Naive thymus-derived CD4-positive, alpha-beta T cell (primary cell): ENCODE measurements at regions of chr17 and their contacts with region 1.

Region 1: GRCh38 chr17:32006957-32007462 is at the start of gene LRRC37B:
- DNase-seq: peak; percentile 80 to 95 (median 87)
- ATAC-seq: peak; percentile 98
- H3K4me3 ChIP-seq: peak within 1 kb of the TSS; percentile 97
- H3K4me3 Mint-ChIP-seq: peak within 1 kb of the TSS; percentile 86 to 98 (median 95)
- H3K27ac ChIP-seq: peak within 1 kb of the TSS; percentile 85
- H3K27ac Mint-ChIP-seq: peak within 1 kb of the TSS; percentile 87 to 98 (median 93)
- H3K4me1 ChIP-seq: peaks cover 9 to 14% of the 10 kb centered on the region in 2 donors
- H3K4me1 Mint-ChIP-seq: peaks cover 25 to 44% (median 35%) of the 10 kb centered on the region in 7 donors
- H3K27me3 ChIP-seq: no peaks in the 10 kb centered on the region
- H3K27me3 Mint-ChIP-seq: peaks cover 0 to 6% (median 0%) of the 10 kb centered on the region in 5 donors
- total RNA-seq, gene LRRC37B: 42.1 to 69.9 (median 56.2) TPM

Region 2: GRCh38 chr17:32019228-32019627 is 12.2 kb after region 1 on chr17:
- CTCF ChIA-PET with region 1: interaction called, 3 read pairs
- POLR2A ChIA-PET with region 1: interaction called, 12 read pairs
- intact Hi-C with region 1: no loop called
- DNase-seq: no peak
- ATAC-seq: no peak
- H3K4me3 ChIP-seq: no peak overlapping the region
- H3K4me3 Mint-ChIP-seq: no peak overlapping the region
- H3K27ac ChIP-seq: no peak overlapping the region
- H3K27ac Mint-ChIP-seq: no peak overlapping the region
- H3K4me1 ChIP-seq: no peaks in the 10 kb centered on the region
- H3K4me1 Mint-ChIP-seq: peaks cover 12 to 40% (median 29%) of the 10 kb centered on the region in 7 donors
- H3K27me3 ChIP-seq: no peaks in the 10 kb centered on the region
- H3K27me3 Mint-ChIP-seq: no peaks in the 10 kb centered on the region

Region 3: DNA sequence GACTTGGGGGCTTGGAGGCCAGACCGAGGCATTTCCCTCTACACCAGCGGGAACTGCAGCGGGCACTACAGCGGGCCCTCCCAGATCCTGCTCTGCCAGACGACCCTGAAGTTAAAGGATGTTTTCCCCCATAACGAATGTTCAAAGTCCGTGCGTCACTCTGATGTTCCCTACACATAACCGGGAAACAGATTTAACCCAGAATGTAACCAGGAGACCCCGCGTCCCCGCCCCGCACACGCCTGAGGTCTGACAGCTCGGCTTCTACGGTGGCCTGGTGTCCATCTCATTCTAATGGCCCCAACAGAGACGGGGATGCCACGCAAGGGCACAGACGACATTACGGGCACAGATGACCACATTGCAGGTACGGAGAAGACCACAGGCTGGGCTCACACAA is 103.6 kb after region 1 on chr17:
- CTCF ChIA-PET with region 1: no interaction called
- POLR2A ChIA-PET with region 1: no interaction called
- intact Hi-C with region 1: no loop called
- DNase-seq: no peak
- ATAC-seq: no peak
- H3K4me3 ChIP-seq: no peak overlapping the region
- H3K4me3 Mint-ChIP-seq: no peak overlapping the region
- H3K27ac ChIP-seq: no peak overlapping the region
- H3K27ac Mint-ChIP-seq: peak overlapping the region in 1 of 9 donors; percentile 41
- H3K4me1 ChIP-seq: peaks cover 0 to 20% of the 10 kb centered on the region in 2 donors
- H3K4me1 Mint-ChIP-seq: peaks cover 14 to 44% (median 28%) of the 10 kb centered on the region in 7 donors
- H3K27me3 ChIP-seq: no peaks in the 10 kb centered on the region
- H3K27me3 Mint-ChIP-seq: no peaks in the 10 kb centered on the region

Region 4: DNA sequence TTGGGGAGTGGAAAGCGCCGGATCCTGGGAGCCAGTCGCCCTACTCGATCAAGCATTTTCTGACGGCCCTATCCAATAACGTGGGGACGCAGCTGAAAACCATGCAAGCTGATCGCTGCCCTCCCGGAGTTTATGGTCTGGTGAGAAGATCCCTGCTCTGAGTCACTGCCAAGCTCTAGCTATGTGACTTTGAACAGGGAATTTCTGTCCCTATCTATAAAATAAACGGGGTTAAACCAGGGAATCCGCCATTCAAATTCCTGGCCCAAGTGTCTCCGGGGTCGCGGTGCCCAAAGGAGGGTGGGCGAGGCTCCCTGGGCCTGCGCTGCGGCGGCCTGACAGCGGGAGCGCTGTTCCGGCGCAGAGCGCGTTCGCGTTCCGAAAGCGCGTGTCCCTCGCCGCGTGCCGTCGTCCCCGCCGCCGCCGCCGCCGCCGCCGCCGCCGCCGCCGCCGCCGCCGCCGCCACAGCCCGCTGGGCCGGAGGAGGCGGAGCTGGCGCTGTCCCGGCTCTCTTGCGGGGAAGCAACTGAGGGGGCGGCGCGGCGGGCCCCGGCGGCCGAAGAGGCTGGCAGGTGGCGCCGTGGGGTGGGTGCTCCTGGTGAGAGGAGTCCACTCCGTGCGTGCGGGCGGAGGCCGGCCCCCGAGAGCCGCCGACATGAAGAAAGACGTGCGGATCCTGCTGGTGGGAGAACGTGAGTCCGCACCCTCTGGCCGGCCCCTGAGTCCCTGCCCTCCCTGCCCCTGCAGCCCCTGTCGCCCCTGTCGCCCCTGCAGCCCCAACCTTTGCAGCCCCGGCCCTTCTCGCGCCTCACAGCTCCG is 135.2 kb after region 1 on chr17 and contains the start of gene RHOT1:
- CTCF ChIA-PET with region 1: interaction called, 13 read pairs
- POLR2A ChIA-PET with region 1: interaction called, 10 read pairs
- intact Hi-C with region 1: loop called (anchors 1 kb)
- DNase-seq: peak; percentile 55 to 84 (median 75)
- ATAC-seq: peak; percentile 90
- H3K4me3 ChIP-seq: peak within 1 kb of the TSS; percentile 91
- H3K4me3 Mint-ChIP-seq: peak within 1 kb of the TSS; percentile 92 to 100 (median 96)
- H3K27ac ChIP-seq: peak within 1 kb of the TSS; percentile 85
- H3K27ac Mint-ChIP-seq: peak within 1 kb of the TSS; percentile 77 to 93 (median 91)
- H3K4me1 ChIP-seq: peaks cover 5 to 15% of the 10 kb centered on the region in 2 donors
- H3K4me1 Mint-ChIP-seq: peaks cover 5 to 43% (median 39%) of the 10 kb centered on the region in 7 donors
- H3K27me3 ChIP-seq: no peaks in the 10 kb centered on the region
- H3K27me3 Mint-ChIP-seq: peaks cover 0 to 4% (median 0%) of the 10 kb centered on the region in 5 donors
- total RNA-seq, gene RHOT1: 24.3 to 31.7 (median 29.3) TPM